ENCODE measurements at regions of chr7 and their contacts with region 1.

Region 1: DNA sequence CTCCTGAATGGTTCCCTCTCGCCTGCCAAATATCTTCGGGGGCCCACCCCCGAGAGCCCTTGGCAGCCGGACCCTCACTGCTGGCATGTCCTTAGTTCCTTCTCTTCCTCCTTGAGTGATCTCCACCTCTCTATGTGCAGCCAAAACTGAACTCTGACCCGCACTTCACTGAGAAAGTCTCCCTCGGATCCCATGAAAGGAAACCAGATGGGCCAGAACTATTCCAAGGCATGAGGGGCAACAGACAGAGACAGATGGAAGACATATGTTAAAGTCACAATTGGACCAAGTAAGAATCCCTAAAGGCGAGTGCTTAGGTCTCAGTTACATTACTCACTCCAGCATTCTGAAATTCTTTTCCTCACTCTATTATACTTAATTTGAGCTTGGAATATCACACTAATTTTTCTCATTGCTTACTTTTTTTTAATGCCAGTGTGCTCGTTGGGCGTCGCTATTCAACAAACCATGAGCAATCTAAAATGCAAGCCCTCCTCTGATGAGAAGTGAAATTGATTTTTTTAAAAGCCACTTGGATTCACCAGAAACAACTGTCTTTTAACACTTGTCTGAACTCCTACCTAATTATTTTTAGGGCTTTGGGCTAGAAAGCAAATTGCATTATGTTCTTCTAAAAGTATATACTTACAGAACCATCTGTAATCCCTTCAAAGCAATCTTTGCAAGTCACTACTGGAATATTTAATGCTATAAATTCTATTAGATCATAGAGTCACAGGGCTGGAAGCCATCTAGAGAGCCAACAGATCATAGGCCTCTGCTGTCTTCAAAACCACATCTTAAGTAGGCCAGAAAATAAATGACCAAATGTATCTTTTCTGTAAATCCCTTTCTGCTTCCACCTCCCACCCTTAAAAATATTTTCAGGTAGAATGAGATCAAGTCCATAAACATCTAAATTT is 43.3 kb upstream of the EZH2 start:
- DNase-seq: no peak
- ATAC-seq: no peak
- H3K4me3 ChIP-seq: no peak overlapping the region
- H3K27ac ChIP-seq: no peak overlapping the region
- H3K4me1 ChIP-seq: no peaks in the 10 kb centered on the region
- H3K27me3 ChIP-seq: no peaks in the 10 kb centered on the region
- CTCF ChIP-seq: no peak

Region 2: GRCh38 chr7:148356303-148356702 is 571.1 kb before region 1 on chr7:
- intact Hi-C with region 1: no loop called
- DNase-seq: peak; percentile 62
- ATAC-seq: peak; percentile 64 to 93 (median 84)
- H3K4me3 ChIP-seq: no peak overlapping the region
- H3K27ac ChIP-seq: no peak overlapping the region
- H3K4me1 ChIP-seq: peaks cover 0 to 12% (median 0%) of the 10 kb centered on the region in 9 donors
- H3K27me3 ChIP-seq: peaks cover 0 to 3% (median 0%) of the 10 kb centered on the region in 7 donors
- CTCF ChIP-seq: no peak

Region 3: GRCh38 chr7:148894591-148894990 is 32.8 kb before region 1 on chr7:
- intact Hi-C with region 1: loop called in 2 of 10 experiments (anchors 5 kb)
- DNase-seq: no peak
- ATAC-seq: no peak
- H3K4me3 ChIP-seq: no peak overlapping the region
- H3K27ac ChIP-seq: no peak overlapping the region
- H3K4me1 ChIP-seq: no peaks in the 10 kb centered on the region
- H3K27me3 ChIP-seq: peaks cover 0 to 37% (median 15%) of the 10 kb centered on the region in 7 donors
- CTCF ChIP-seq: no peak

Region 4: DNA sequence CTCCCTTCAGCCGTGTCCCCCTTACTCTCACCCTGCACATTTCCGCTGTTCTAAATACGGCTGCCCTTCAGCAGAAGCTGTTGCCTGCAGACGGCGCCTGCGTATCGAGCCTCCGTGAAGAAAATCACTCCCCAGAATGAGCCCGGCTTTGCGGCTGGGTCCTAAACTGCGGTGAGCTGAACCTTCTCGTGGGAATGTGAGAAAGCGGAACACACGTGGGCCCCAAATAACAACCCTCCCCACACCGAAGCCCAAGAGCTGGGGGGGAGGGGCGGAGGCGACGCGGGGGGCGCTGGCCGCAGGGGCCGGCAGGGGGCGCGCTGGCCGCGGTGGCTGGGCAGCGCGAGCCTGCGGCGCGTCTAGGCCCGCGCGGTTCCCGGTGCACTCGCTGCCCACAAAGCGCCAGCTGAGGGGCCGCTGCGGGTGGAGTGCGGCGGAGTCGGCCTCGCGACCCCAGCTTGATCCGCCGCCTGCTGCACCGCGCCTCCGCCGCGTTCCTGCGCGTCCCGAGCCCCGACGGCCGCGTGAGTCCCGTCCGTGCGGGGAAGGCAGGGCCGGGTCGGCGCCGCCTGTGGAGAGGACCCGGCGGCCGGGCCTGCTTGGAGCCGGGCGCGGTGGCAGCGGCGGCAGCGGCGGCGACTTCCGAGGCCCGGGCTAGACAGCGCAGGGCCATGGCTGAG is 219.8 kb after region 1 on chr7 and contains the start of gene ZNF398:
- intact Hi-C with region 1: no loop called
- DNase-seq: peak; percentile 63 to 79
- ATAC-seq: peak; percentile 86 to 97 (median 91)
- H3K4me3 ChIP-seq: peak within 1 kb of the TSS; percentile 82 to 97 (median 92)
- H3K27ac ChIP-seq: peak within 1 kb of the TSS; percentile 45 to 95 (median 90)
- H3K4me1 ChIP-seq: peaks cover 0 to 29% (median 18%) of the 10 kb centered on the region in 9 donors
- H3K27me3 ChIP-seq: no peaks in the 10 kb centered on the region
- CTCF ChIP-seq: peak; percentile 55 to 99 (median 81)
- total RNA-seq, gene ZNF398: 6.6 to 9.2 (median 7.8) TPM